ENCODE measurements at regions of chr10 and their contacts with region 1.

Region 1: DNA sequence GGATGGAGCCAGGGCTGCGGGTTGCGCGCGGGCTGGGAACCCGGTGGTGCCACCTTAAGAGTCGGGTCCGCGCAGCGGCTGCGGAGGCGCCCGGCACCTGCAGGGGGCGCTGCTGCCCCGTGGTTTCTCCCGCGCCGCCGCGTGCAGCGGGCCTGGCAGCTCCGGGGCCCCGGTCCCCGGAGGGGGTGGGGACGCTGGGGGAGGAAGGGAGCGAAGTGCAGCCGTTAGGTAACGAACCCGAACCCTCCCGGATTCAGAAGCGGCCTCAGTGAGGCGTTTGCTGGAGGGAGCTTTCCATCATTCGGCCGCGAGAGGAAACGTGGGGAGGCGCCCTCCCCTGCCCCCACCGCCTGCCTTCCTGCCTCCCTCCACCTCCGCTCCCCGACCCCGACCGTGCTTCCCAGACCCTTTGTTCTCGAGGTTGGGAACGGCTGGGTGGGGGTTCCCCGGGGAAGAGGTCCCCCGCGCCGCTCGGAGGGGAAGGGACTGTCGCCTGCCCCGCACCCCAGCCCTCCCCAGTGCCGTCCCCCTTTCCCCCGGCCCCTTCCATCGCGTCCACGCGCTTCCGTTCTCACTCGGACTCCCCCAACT is 29.6 kb downstream of the SKIDA1 start:
- DNase-seq: peak; percentile 85
- H3K4me3 Mint-ChIP-seq: peak overlapping the region; percentile 77
- H3K27ac Mint-ChIP-seq: no peak overlapping the region
- H3K4me1 Mint-ChIP-seq: peaks cover 14% of the 10 kb centered on the region
- H3K27me3 Mint-ChIP-seq: peaks cover 54% of the 10 kb centered on the region

Region 2: DNA sequence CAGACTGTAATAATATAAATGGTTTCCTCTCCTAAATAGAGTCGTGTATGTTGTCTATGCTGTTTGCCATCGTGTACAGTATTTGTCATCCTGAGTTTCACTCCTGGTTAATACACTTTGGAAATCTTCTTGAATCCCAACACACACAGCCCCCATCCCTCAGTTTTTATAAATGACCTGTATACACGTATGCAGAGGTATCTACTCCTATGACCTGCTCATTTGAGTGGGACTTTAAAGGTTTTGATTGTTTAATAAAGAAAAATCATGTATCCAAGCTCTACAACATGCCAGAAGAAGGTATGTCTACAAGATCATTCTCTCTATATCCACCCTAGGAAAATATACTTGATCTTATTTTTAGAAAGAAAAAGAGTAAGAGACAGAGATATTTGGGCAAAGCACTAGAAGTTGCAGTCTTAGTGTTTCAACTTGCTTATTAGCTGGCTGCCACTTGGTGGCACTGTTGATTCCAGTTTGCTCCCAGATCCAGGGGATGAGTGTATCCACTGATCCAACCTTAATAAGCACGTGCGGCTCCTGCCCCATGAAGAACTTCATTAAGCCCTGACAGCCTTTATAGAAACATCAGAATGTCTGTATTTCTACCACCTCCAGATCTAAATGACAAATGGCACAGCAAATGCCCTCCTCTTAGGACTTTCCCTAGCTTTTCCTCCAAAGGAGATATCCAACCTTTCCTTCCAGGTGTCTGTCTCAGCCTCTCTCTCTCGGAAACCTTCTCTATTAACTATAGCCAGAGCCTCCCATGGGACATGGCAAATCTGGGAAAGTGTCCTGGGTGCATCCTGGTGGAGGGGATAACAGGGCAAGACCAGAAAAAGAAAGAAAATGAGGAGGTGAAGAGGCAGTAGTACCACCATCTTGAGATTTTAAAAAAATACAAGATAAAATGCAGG is 417.2 kb before region 1 on chr10:
- CTCF ChIA-PET with region 1: no interaction called
- intact Hi-C with region 1: loop called (anchors 2 kb)
- DNase-seq: peak; percentile 54
- H3K4me3 Mint-ChIP-seq: no peak overlapping the region
- H3K27ac Mint-ChIP-seq: no peak overlapping the region
- H3K4me1 Mint-ChIP-seq: no peaks in the 10 kb centered on the region
- H3K27me3 Mint-ChIP-seq: peaks cover 5% of the 10 kb centered on the region

Region 3: DNA sequence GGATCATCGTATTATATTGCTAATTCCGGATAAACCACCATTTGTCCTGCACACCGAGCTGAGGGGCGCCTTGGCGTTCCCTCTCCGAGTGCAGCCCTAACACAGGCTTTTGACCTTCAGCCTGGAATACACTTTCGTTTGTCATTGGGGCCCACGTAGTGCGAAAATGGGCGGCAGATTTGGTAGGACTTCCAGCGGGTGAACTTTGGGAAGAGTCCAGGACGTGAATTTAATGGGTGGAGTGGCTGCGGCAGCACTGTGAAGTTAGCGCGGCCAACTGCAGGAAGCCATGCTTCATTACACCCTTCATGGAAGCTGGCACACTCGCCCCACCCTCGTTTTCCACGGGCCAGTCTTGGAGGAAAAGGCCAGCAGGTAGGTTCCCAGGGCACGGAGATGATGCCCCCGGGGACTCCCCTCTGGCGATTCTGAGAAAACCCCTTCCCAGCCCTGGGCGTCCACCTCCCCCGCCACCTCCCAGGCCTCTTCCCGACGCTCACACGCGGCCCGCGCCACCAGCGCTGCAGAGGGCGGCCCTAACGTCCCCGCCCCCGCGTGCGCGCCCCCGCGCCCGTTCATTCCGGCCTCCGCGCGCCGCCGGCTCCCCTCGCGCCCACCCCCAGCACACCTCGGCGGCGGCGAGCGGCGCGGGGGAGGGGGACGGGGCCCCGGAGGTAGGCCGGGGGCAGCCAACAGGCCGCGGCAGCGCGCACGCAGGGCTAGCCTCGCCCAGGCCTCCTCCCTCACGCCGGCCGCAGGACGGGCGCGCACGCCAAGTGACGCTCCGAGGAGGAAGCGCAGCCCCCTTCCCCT is 37.8 kb after region 1 on chr10 and contains the start of gene MLLT10:
- CTCF ChIA-PET with region 1: interaction called, 5 read pairs
- intact Hi-C with region 1: loop called (anchors 1 kb)
- DNase-seq: peak; percentile 91
- H3K4me3 Mint-ChIP-seq: peak within 1 kb of the TSS; percentile 85
- H3K27ac Mint-ChIP-seq: peak within 1 kb of the TSS; percentile 91
- H3K4me1 Mint-ChIP-seq: peaks cover 23% of the 10 kb centered on the region
- H3K27me3 Mint-ChIP-seq: no peaks in the 10 kb centered on the region
- total RNA-seq, gene MLLT10: 23.0 to 23.7 TPM

Region 4: DNA sequence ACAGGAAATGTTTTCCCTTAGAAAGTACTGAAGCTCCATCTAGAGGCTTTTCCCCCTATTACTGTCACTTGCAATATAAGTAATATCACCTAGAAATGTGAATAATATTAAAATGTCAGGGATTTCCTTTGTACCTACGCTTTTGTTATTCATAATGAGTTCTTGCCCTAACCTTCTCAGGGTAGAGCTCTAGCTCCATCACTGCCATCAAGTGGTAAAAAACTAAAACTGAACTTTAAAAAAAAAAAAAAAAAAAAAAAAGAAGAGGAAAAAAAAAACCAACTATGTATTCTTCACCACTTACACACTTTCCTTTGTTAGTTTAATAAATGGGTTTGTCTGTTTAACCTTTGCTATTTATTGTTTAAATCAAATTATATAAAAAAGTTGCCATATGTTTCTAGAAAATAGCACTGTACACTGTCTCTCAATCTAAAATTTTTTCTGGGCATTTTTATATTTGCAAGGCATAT is 457.8 kb after region 1 on chr10:
- CTCF ChIA-PET with region 1: interaction called, 27 read pairs
- intact Hi-C with region 1: loop called (anchors 1 kb)
- DNase-seq: no peak
- H3K4me3 Mint-ChIP-seq: no peak overlapping the region
- H3K27ac Mint-ChIP-seq: no peak overlapping the region
- H3K4me1 Mint-ChIP-seq: peaks cover 3% of the 10 kb centered on the region
- H3K27me3 Mint-ChIP-seq: no peaks in the 10 kb centered on the region

Region 5: DNA sequence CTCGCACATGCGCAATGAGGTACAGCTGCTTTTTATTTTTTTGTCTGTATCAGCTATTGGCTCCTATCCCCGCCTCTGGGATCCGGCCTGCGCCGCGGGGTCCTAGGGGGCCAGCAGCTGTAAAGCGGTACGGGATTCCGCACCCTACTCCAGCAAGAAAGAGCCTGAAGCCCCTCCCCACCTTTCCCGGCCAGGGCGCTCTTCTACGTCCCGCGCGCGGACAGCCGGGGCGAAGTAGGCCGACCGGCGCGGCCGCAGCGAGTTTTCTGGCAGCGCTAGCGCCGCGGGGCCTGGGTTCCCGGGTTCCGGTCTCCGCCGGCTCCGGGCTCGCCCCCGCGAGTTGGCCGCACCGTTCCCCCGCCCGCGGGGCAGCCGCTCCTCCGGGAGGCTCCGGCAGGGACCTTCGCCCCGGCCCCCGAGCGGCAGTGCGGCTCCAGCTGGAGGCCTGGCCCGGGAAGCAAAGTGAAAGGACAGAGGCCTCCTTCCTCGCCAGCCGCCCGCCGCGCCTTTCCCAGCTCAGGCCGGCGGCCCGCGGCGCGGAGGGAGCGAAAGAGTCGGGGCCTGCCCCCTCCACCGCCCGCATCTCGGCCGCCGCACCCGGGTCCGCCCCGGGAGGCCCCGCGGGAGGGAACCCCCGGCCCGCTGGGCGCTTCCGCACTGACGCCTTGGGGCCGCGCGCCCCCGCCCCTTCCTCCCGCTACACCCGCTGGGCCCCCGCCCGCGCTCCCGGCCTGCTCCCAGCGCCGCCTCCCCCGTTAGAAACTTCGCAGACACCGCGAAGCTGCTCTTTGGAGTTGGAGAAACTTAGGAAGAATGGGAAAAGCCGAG is 844.7 kb after region 1 on chr10:
- CTCF ChIA-PET with region 1: no interaction called
- intact Hi-C with region 1: loop called (anchors 1 kb)
- DNase-seq: peak; percentile 63
- H3K4me3 Mint-ChIP-seq: peak overlapping the region; percentile 88
- H3K27ac Mint-ChIP-seq: peak overlapping the region; percentile 74
- H3K4me1 Mint-ChIP-seq: peaks cover 19% of the 10 kb centered on the region
- H3K27me3 Mint-ChIP-seq: peaks cover 69% of the 10 kb centered on the region

Region 6: GRCh38 chr10:22988581-22989360 is 1492.9 kb after region 1 on chr10:
- CTCF ChIA-PET with region 1: no interaction called
- intact Hi-C with region 1: loop called (anchors 2 kb)
- DNase-seq: peak; percentile 82
- H3K4me3 Mint-ChIP-seq: no peak overlapping the region
- H3K27ac Mint-ChIP-seq: no peak overlapping the region
- H3K4me1 Mint-ChIP-seq: peaks cover 11% of the 10 kb centered on the region
- H3K27me3 Mint-ChIP-seq: no peaks in the 10 kb centered on the region